BJ (cell line): ENCODE measurements at regions of chr12 and their contacts with region 1.

Region 1: GRCh38 chr12:4030929-4031702 is 157.9 kb upstream of the PARP11 start:
- DNase-seq: peak; percentile 93
- H3K4me3 ChIP-seq: peak overlapping the region; percentile 46
- H3K27me3 ChIP-seq: peaks cover 7% of the 10 kb centered on the region
- CTCF ChIP-seq: no peak

Region 2: GRCh38 chr12:3988519-3989448 is 42.3 kb before region 1 on chr12:
- CTCF ChIA-PET with region 1: interaction called, 392 read pairs
- POLR2A ChIA-PET with region 1: no interaction called
- DNase-seq: no peak
- H3K4me3 ChIP-seq: no peak overlapping the region
- H3K27me3 ChIP-seq: peaks cover 1% of the 10 kb centered on the region
- CTCF ChIP-seq: no peak